K562 (cell line): ENCODE measurements at regions of chr2 and their contacts with region 1.

Region 1: GRCh38 chr2:55175254-55176025 is 56.7 kb downstream of the CLHC1 start:
- DNase-seq: peak; percentile 65 to 67 (median 66)
- ATAC-seq: peak; percentile 93
- H3K4me3 ChIP-seq: no peak overlapping the region
- H3K27ac ChIP-seq: no peak overlapping the region
- H3K4me1 ChIP-seq: no peaks in the 10 kb centered on the region; a peak in 1 of 5 replicates
- H3K27me3 ChIP-seq: no peaks in the 10 kb centered on the region
- CTCF ChIP-seq: peak; percentile 58 to 83 (median 59); a peak in 5 of 6 replicates
- EP300 ChIP-seq: 0 out of 2 replicates have a peak, but pooled peaks have one; percentile 19
- POLR2A ChIP-seq: no peak
- RAD21 ChIP-seq: peak; percentile 91 to 94

Region 2: DNA sequence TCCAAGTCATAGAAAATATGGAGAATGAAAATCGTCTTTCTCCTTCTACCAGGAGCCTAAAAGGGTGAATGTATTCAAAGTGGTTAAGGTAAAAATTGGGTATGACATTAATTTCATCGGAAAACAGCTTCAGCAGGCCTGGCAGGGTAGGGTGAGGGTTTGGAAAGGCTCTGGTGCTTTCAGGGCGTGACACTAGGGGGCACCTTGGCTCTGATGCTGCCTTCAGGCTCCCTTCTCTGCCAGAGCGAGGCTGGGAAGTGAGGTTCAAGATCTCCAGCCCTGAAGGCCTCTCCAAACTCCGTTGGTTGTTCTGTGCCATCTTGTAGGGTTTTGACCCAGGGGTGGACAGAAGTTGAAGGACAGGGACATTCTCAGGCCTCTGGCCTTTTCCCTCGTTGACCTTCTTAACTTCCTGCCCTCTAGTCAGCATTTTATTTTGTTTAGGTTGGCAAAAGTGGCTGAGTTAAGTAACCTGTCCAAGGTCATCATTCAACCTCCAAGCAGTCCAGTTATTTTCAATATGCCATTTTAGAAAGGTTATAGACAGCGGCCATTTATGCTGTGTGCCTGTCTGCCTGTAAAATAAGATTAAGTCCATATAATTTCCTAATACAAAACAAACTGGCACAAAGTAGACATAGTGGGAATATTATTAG is 411.7 kb before region 1 on chr2:
- CTCF ChIA-PET with region 1: no interaction called
- POLR2A ChIA-PET with region 1: no interaction called
- in situ Hi-C with region 1: no loop called
- intact Hi-C with region 1: loop called (anchors 2 kb)
- DNase-seq: peak in 2 of 4 experiments; percentile 32 to 40
- ATAC-seq: peak; percentile 88
- H3K4me3 ChIP-seq: no peak overlapping the region
- H3K27ac ChIP-seq: no peak overlapping the region
- H3K4me1 ChIP-seq: no peaks in the 10 kb centered on the region
- H3K27me3 ChIP-seq: peaks cover 0 to 4% of the 10 kb centered on the region in 2 experiments; a peak in 1 of 5 replicates
- CTCF ChIP-seq: peak; percentile 38 to 72 (median 56)
- EP300 ChIP-seq: no peak
- POLR2A ChIP-seq: no peak
- RAD21 ChIP-seq: peak; percentile 62 to 75

Region 3: GRCh38 chr2:54899576-54900200 is 275.8 kb before region 1 on chr2:
- CTCF ChIA-PET with region 1: interaction called, 18 read pairs
- POLR2A ChIA-PET with region 1: interaction called, 3 read pairs
- in situ Hi-C with region 1: no loop called
- intact Hi-C with region 1: no loop called
- DNase-seq: peak in 2 of 4 experiments; percentile 38 to 63
- ATAC-seq: peak; percentile 87
- H3K4me3 ChIP-seq: no peak overlapping the region
- H3K27ac ChIP-seq: no peak overlapping the region
- H3K4me1 ChIP-seq: peaks cover 0 to 8% of the 10 kb centered on the region in 2 experiments; a peak in 3 of 5 replicates
- H3K27me3 ChIP-seq: peaks cover 0 to 16% of the 10 kb centered on the region in 2 experiments; a peak in 3 of 5 replicates
- CTCF ChIP-seq: peak; percentile 55 to 85 (median 68); a peak in 5 of 6 replicates
- EP300 ChIP-seq: no peak
- POLR2A ChIP-seq: no peak
- RAD21 ChIP-seq: peak; percentile 92 to 94

Region 4: GRCh38 chr2:55268907-55269644 is 93.6 kb after region 1 on chr2 and contains the start of gene MTIF2:
- CTCF ChIA-PET with region 1: no interaction called
- POLR2A ChIA-PET with region 1: no interaction called
- in situ Hi-C with region 1: no loop called
- intact Hi-C with region 1: no loop called
- DNase-seq: peak; percentile 88 to 98 (median 91)
- ATAC-seq: peak; percentile 100
- H3K4me3 ChIP-seq: peak within 1 kb of the TSS; percentile 71
- H3K27ac ChIP-seq: peak within 1 kb of the TSS; percentile 91
- H3K4me1 ChIP-seq: peaks cover 7 to 8% of the 10 kb centered on the region in 2 experiments; a peak in 3 of 5 replicates
- H3K27me3 ChIP-seq: no peaks in the 10 kb centered on the region
- CTCF ChIP-seq: peak; percentile 24 to 50 (median 36); a peak in 4 of 6 replicates
- EP300 ChIP-seq: peak; percentile 50; the same call in 1 of the 2 replicates
- POLR2A ChIP-seq: peak; percentile 97
- RAD21 ChIP-seq: peak in 1 of 2 experiments; percentile 37; a peak in 2 of 4 replicates
- polyA plus RNA-seq, gene MTIF2: 58.7 to 106 TPM